ENCODE measurements at regions of chr6 and their contacts with region 1.

Region 1: GRCh38 chr6:10316327-10316726 is 98.5 kb downstream of the TFAP2A start:
- DNase-seq: peak; percentile 16 to 85 (median 75)
- H3K4me3 ChIP-seq: peak overlapping the region in 48 of 59 donors; percentile 4 to 57 (median 36)
- H3K27ac ChIP-seq: peak overlapping the region in 58 of 59 donors; percentile 49 to 96 (median 87)
- H3K27me3 ChIP-seq: peaks cover 0 to 5% (median 0%) of the 10 kb centered on the region in 45 donors
- CTCF ChIP-seq: peak in 6 of 56 donors; percentile 5 to 21 (median 15)

Region 2: DNA sequence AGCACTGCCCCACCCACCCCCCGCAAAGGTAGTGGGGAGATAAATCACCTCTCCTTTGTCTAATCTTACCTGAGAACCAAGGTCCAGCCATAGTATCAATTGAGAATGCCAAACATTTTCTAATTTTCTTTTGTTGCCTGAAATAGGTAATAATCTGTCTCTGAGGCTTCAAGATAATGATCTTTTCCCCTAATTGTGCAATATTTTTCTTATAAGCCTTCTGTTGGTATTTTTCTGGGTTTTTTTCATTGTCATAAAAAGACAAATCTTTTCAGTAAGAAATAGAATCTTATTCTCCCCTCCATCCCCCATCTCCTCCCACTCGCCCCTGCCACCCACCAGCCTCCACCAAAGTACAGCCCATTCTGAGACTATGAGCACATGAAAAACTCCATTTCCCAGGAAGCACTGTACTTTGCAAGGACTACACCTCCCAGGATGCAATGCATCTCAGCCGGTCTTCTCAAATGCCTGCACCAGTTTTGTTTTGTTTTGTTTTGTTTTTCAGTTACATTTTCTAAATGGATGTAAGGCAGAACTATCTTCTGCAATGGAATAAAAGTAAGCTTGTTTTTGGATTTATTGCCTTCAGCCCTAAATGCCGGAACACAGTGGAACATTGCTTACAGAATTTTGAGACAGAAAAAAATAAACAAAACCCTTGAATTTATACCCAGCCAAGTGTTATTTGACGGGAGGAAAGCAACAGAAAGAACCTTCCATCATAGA is 169.4 kb before region 1 on chr6:
- intact Hi-C with region 1: loop called in 1 of 2 experiments (anchors 2 kb)
- DNase-seq: peak in 6 of 10 donors; percentile 4 to 73 (median 41)
- H3K4me3 ChIP-seq: peak overlapping the region in 57 of 59 donors; percentile 16 to 73 (median 52)
- H3K27ac ChIP-seq: peak overlapping the region in 57 of 59 donors; percentile 8 to 95 (median 80)
- H3K27me3 ChIP-seq: peaks cover 0 to 5% (median 0%) of the 10 kb centered on the region in 45 donors
- CTCF ChIP-seq: peak in 6 of 56 donors; percentile 8 to 28 (median 14)

Region 3: GRCh38 chr6:10256113-10256690 is 60.1 kb before region 1 on chr6:
- intact Hi-C with region 1: no loop called
- DNase-seq: no peak
- H3K4me3 ChIP-seq: no peak overlapping the region
- H3K27ac ChIP-seq: no peak overlapping the region
- H3K27me3 ChIP-seq: peaks cover 0 to 5% (median 0%) of the 10 kb centered on the region in 45 donors
- CTCF ChIP-seq: peak in 30 of 56 donors; percentile 9 to 42 (median 24)

Measured in dorsolateral prefrontal cortex (tissue), 120 donors.